Posterior vena cava (tissue), 2 donors: ENCODE measurements at regions of chr2 and their contacts with region 1.

Region 1: DNA sequence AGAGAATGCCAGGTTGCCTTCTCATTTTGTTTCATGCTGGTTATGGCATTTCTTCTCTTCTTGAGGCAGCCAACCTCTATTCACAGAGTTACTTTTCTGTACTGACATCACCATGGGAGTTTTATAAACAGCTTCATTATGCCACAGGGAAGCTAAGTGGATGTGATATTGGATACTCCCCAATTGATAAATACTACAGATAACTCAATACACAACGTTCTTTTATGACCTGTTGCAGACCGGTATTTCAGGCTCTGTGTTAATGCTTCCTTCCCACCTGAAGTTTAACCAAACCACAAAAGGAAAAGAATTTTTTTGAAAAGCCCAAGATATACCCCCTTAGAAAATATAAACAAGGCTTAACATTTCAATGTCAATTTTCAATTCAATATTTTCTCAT is 258.3 kb upstream of the SOX11 start:
- DNase-seq: no peak

Region 2: GRCh38 chr2:5250482-5250881 is 183.4 kb before region 1 on chr2:
- intact Hi-C with region 1: no loop called
- DNase-seq: no peak

Region 3: GRCh38 chr2:5391362-5391761 is 42.5 kb before region 1 on chr2:
- intact Hi-C with region 1: no loop called
- DNase-seq: no peak

Region 4: DNA sequence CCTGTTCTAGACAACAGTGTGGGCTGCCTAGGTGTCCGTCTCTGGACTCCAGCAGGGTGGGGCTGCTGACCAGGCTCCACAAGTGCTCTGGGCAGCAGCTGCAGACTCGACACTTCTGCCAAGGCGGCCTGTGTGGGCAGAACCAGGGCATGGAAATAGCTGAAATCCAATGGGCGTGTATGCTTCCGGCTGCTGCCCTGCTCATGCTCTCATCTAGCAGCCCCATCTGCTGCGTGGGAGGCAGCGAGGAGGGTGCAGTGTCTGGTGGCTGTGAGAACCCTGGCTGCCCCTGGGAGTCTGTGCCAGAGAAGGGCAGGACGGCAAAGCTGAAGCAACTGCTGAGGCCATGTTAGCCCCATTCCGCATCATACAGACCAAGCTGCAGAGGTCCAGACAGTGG is 433.2 kb after region 1 on chr2:
- intact Hi-C with region 1: loop called in 1 of 2 experiments (anchors 5 kb)
- DNase-seq: no peak